ENCODE measurements at regions of chr2 and their contacts with region 1.

Region 1: GRCh38 chr2:127784965-127785518 is 25.9 kb downstream of the WDR33 start:
- DNase-seq: no peak
- ATAC-seq: no peak
- H3K4me3 ChIP-seq: no peak overlapping the region
- H3K4me3 Mint-ChIP-seq: peak overlapping the region in 1 of 10 donors; percentile 14
- H3K27ac ChIP-seq: no peak overlapping the region
- H3K27ac Mint-ChIP-seq: peak overlapping the region in 7 of 9 donors; percentile 0 to 28 (median 3)
- H3K4me1 ChIP-seq: peaks cover 0 to 5% of the 10 kb centered on the region in 2 donors
- H3K4me1 Mint-ChIP-seq: peaks cover 7 to 45% (median 30%) of the 10 kb centered on the region in 7 donors
- H3K27me3 ChIP-seq: no peaks in the 10 kb centered on the region
- H3K27me3 Mint-ChIP-seq: no peaks in the 10 kb centered on the region

Region 2: DNA sequence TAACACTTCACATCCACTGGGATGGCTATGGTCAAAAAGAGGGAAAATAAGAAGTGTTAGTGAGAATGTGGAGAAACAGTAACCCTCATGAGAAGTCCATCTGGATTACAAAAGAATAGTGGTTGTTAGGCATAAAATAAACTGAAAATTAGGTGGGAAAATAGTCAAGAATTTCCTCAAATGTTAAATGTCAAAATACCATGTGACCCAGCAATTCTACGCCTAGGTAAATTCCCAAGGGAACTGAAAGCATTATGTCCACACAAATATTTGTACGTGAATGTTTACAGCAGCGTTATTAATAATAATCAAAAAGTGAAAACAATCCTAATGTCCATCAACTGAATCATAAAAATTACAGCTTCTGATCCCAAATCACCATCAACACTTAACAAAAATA is 14.9 kb after region 1 on chr2:
- CTCF ChIA-PET with region 1: interaction called, 3 read pairs
- POLR2A ChIA-PET with region 1: no interaction called
- intact Hi-C with region 1: loop called in 1 of 2 experiments (anchors 2 kb)
- DNase-seq: no peak
- ATAC-seq: no peak
- H3K4me3 ChIP-seq: no peak overlapping the region
- H3K4me3 Mint-ChIP-seq: peak overlapping the region in 2 of 10 donors; percentile 7 to 47
- H3K27ac ChIP-seq: no peak overlapping the region
- H3K27ac Mint-ChIP-seq: no peak overlapping the region
- H3K4me1 ChIP-seq: peaks cover 11 to 39% of the 10 kb centered on the region in 2 donors
- H3K4me1 Mint-ChIP-seq: peaks cover 32 to 95% (median 60%) of the 10 kb centered on the region in 7 donors
- H3K27me3 ChIP-seq: no peaks in the 10 kb centered on the region
- H3K27me3 Mint-ChIP-seq: no peaks in the 10 kb centered on the region